Right ventricle myocardium inferior (tissue), 1 donor: ENCODE measurements at regions of chr4 and their contacts with region 1.

Region 1: DNA sequence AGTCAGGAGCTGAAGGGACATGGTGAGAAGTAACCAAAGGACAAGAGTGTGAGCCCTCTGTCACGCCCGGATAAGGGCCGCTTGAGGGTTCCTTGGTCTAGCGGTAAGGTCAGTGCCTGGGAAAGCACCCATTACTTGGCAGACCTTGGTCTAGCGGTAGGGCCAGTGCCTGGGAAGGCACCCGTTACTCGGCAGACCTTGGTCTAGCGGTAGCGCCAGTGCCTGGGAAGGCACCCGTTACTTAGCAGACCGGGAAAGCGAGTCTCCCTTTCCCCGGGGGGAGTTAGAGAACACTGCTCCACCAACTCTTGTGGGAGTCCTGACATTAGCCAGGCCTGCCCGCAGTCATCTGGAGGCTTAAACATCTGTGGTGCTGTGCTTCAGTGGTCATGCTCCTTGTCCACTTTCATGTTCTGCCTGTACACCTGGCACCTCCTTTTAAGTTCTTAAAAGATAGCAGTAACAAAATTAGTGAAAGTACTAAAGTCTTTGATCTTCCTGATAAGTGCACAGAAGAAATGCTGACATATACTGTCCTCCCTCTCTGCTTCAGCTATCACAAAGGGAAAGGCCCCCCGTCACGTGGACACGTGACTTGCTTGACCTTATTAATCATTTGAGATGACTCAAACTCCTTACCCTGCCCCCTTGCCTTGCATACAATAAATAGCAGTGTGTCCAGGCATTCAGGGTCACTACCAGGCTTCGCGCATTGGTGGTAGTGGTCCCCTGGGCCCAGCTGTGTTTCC is 9.3 kb upstream of the SEC24B start:
- DNase-seq: no peak
- ATAC-seq: no peak

Region 2: GRCh38 chr4:109313168-109314133 is 110.8 kb before region 1 on chr4:
- intact Hi-C with region 1: no loop called
- DNase-seq: no peak
- ATAC-seq: no peak

Region 3: GRCh38 chr4:109599046-109599652 is 174.9 kb after region 1 on chr4:
- intact Hi-C with region 1: no loop called
- DNase-seq: no peak
- ATAC-seq: no peak

Region 4: DNA sequence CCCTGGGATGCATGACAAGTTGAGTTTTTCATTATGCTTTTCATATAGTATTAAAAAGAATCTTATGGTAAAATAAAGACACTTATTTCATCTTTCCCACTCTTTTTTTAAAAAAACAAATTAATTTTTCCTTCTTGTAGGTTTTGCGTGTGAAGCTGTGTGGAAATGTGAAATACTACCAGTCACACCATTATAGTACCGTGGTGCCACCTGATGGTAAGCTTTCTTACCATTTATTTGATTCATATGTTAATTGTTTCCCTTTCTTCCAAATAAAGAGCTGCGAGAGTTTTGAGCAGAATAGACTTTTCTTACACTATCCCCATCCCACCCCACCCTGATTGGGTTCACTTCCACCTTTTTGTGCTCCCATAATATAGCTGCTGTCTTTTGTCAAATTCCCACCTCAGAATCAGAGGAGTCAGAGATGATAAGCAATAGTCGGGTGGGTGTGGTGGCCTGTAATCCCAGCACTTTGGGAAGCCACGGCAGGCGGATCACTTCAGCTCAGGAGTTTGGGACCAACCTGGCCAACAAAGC is 234.7 kb after region 1 on chr4:
- intact Hi-C with region 1: loop called (anchors 5 kb)
- DNase-seq: no peak
- ATAC-seq: no peak

Region 5: GRCh38 chr4:109803924-109804571 is 379.8 kb after region 1 on chr4:
- intact Hi-C with region 1: loop called (anchors 5 kb)
- DNase-seq: no peak
- ATAC-seq: no peak

Region 6: GRCh38 chr4:109826719-109827118 is 402.5 kb after region 1 on chr4:
- intact Hi-C with region 1: loop called (anchors 2 kb)
- DNase-seq: no peak
- ATAC-seq: no peak

Region 7: GRCh38 chr4:109977854-109978501 is 553.7 kb after region 1 on chr4:
- intact Hi-C with region 1: loop called (anchors 2 kb)
- DNase-seq: no peak
- ATAC-seq: no peak

Region 8: GRCh38 chr4:110516106-110516922 is 1092.0 kb after region 1 on chr4:
- intact Hi-C with region 1: loop called (anchors 10 kb)
- DNase-seq: no peak
- ATAC-seq: peak; percentile 73